CD4-positive, alpha-beta T cell (primary cell): ENCODE measurements at regions of chr5 and their contacts with region 1.

Region 1: GRCh38 chr5:179795863-179796833 is 2.4 kb downstream of the LTC4S start:
- DNase-seq: peak; percentile 53 to 89 (median 69)
- ATAC-seq: peak; percentile 70
- H3K4me3 ChIP-seq: peak overlapping the region; percentile 43
- H3K4me3 Mint-ChIP-seq: peak overlapping the region; percentile 83
- H3K27ac ChIP-seq: peak overlapping the region in 1 of 2 donors; percentile 13
- H3K27ac Mint-ChIP-seq: peak overlapping the region; percentile 44
- H3K4me1 ChIP-seq: peaks cover 38% of the 10 kb centered on the region
- H3K4me1 Mint-ChIP-seq: peaks cover 40% of the 10 kb centered on the region
- H3K27me3 ChIP-seq: no peaks in the 10 kb centered on the region
- H3K27me3 Mint-ChIP-seq: no peaks in the 10 kb centered on the region
- CTCF ChIP-seq: peak; percentile 74

Region 2: DNA sequence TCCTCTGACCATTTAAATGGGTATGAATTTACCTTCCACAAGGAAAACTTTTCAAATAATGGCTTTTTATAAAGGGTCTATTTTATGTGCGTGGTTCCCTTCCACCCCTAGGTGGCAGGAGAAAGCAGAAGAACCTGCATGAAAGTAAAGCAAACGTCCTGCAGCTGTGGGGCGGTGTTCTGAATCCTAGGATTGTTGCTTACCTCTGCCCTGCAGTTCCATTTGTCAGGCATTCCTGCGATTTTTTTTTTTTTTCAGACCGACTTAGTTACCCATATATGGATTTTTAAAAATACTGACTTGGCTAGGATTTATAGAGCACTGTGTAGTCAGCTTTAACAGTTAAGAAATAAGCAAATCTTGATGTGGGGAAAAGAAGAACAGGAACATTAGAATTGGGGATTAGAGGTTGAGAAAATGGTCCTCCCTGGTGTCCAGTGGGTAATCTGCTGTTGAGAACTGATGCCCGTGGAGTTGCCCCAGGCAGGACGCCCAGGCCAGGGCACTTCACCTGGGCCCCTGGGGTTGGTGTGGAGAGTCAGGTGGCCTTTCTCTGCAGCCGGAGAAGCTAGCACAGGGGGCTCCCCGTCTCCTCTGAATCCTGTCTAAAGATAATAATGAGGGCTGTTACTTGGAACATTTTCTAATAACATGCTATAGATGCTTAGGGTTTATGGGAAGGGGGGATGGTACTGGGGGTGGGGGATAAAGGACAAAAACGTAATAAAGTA is 32.8 kb before region 1 on chr5:
- CTCF ChIA-PET with region 1: interaction called, 22 read pairs
- POLR2A ChIA-PET with region 1: interaction called, 16 read pairs
- intact Hi-C with region 1: loop called (anchors 1 to 2 kb)
- DNase-seq: peak; percentile 19 to 80 (median 38)
- ATAC-seq: peak; percentile 73
- H3K4me3 ChIP-seq: no peak overlapping the region
- H3K4me3 Mint-ChIP-seq: no peak overlapping the region
- H3K27ac ChIP-seq: no peak overlapping the region
- H3K27ac Mint-ChIP-seq: peak overlapping the region; percentile 52
- H3K4me1 ChIP-seq: peaks cover 53% of the 10 kb centered on the region
- H3K4me1 Mint-ChIP-seq: peaks cover 66% of the 10 kb centered on the region
- H3K27me3 ChIP-seq: no peaks in the 10 kb centered on the region
- H3K27me3 Mint-ChIP-seq: no peaks in the 10 kb centered on the region
- CTCF ChIP-seq: peak; percentile 94

Region 3: GRCh38 chr5:179986328-179986727 is 190.2 kb after region 1 on chr5:
- CTCF ChIA-PET with region 1: no interaction called
- POLR2A ChIA-PET with region 1: no interaction called
- intact Hi-C with region 1: no loop called
- DNase-seq: no peak
- ATAC-seq: no peak
- H3K4me3 ChIP-seq: no peak overlapping the region
- H3K4me3 Mint-ChIP-seq: no peak overlapping the region
- H3K27ac ChIP-seq: no peak overlapping the region
- H3K27ac Mint-ChIP-seq: no peak overlapping the region
- H3K4me1 ChIP-seq: no peaks in the 10 kb centered on the region
- H3K4me1 Mint-ChIP-seq: no peaks in the 10 kb centered on the region
- H3K27me3 ChIP-seq: no peaks in the 10 kb centered on the region
- H3K27me3 Mint-ChIP-seq: no peaks in the 10 kb centered on the region
- CTCF ChIP-seq: no peak